Cardiac septum (tissue), 1 donor: ENCODE measurements at regions of chrX and their contacts with region 1.

Region 1: DNA sequence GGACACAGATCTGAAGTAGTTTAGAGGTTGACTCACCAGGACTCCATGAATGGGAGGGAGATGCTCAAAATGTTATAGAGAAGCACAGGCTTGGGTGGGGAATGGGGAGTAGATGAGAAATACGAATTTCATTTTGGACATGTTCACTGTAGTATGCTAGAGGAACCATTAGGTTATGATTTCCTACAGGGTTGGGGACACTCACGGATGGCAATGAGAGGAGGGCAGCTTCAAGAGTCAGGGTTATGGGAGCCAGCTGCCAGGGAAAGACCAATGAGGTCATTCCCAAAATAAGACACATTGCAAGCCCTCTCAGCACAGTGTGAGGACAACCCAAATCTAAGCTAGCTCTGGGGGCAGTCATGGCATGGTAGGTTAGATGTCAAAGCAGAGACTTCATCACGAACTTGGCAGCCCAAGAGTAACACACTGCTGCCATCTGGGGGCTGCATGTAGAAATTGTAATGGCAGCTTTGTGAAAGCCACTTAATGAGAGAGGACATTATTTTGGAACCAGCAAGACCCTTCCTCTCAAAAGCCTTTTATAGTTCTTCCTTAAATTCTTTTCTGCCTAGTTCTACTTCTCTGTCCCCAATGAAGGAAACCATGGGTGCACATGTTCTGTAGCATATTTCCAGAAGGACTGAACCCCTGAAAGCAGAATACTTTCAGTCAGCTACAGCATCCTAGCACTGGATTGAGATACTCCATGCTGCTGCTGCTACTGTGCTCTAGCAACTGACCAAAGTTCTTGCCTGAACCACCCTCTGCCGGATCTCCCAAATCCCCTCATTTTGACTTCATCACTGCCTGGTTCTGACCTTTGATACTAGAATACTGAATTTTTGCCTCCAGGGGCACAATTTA is 16.2 kb upstream of the ZCCHC12 start:
- DNase-seq: no peak

Region 2: GRCh38 chrX:118644378-118644777 is 163.0 kb before region 1 on chrX:
- intact Hi-C with region 1: loop called (anchors 5 kb)
- DNase-seq: no peak

Region 3: DNA sequence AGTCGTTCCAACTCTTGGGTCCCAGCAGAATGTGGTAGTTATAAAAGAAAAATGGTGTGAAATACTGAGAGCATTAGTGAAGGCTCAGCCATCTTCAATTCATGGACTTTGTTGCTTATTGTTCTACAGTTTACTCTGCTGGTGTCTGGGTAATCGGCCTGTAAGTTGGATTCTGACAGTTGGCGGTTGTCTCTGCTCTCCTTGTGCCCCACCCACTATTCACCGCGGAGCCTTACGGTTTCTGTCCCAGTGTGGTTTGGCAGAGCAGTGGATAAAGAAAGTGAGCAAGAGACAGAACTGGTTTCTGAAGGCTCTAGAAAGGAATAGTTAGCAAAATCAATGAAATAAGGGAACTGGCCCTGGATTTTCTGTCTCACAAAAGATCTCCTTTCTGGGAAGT is 176.1 kb after region 1 on chrX:
- intact Hi-C with region 1: no loop called
- DNase-seq: no peak